Psoas muscle (tissue), 8 donors: ENCODE measurements at regions of chr3 and their contacts with region 1.

Region 1: DNA sequence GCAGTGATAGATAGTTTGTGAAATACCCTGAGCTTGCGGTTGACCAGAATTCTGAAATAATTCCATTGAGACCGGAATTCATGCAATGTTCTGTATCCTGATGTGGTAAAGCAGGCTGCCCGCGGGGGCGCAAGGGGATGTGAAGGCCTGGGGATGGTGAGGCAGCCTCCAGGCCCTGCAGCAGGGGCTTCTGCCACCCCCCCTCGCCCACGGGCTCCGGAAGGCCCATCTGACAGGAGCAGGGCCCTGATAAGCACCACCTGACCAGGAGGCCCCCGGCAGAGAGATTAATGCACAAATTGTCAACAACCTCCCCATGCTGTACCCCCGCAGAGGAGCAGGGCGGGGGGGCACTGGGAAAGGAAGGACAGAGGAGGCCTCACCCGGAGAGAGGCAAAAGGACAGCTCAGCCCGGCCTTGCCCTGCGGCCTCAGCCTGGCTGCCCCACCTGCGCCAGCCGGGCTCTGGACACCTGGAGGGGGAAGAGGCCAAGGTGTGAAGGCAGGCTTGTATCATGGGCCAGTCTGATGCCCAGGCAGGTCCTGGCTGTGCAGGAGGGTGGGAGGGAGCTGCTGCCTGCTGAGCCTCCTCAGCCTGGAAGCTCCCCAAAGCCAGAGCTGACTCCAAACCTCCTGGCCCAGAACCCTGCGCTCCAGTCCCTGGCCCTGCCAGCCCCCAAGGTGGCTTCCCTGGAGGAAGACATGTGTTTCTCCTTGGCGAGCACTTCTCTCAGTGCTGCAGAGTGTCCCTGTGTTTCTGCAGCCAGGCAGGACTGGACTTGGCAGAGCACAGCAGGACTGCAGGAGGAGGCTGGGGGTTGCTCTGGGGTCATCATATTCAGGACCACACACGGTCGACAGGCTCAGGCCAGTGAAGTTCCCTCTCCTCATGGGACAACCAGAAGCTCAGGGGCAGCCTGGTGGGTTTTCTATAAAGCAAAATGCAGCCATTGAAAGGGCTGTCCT is 46.5 kb downstream of the RPN1 start:
- DNase-seq: no peak
- ATAC-seq: no peak
- H3K4me3 ChIP-seq: no peak overlapping the region
- H3K27ac ChIP-seq: no peak overlapping the region
- H3K4me1 ChIP-seq: no peaks in the 10 kb centered on the region
- H3K27me3 ChIP-seq: no peaks in the 10 kb centered on the region
- CTCF ChIP-seq: no peak

Region 2: DNA sequence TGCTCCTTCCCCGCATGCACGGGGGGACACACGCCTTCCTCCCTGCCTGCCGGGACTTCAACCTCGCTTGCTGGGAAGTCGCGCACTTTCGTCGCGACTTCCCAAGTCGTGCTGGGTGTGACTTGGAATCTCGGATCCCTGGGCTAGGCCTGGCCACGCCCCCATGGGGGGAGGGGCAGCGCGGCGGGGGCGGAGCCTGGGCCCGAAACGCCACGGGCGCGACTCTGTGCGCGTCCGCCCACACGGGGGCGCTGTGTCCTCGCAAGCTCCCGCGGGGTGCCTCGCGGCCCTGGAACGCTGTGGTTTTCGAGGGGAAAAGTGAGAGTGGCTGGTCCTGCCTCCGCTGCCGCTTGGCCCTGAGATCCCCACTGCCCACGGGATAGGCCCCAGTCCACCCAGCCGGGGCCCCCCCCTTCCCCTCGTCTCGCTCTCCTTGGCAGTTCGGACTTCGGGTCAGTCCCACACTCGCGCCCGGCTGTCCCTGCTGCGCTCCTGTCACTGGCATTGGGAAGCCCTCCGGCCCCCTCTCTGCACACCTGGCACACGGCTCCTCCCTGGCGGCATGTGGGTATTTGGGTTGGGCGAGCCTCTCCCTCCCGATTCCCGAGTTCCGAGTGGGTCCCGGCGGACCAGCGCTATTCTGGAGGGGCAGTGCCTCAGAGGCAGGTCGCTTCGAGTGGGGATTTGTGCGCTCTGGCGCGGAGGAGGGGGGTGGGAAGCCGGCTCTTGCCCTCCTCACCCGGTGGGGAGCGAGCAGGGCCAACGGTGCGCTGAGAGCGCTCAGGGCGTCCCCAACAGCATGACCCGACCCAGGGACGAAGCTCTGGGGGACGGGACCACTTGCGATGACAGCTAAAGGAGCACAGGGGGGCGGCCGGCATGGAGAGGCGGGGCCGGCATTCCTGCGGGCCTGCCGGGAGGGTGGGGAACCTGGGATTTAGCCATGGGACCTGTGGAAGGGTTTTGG is 528.3 kb before region 1 on chr3:
- intact Hi-C with region 1: loop called (anchors 5 to 10 kb)
- DNase-seq: peak; percentile 89 to 94
- ATAC-seq: peak; percentile 91 to 94 (median 92)
- H3K4me3 ChIP-seq: peak overlapping the region; percentile 70
- H3K27ac ChIP-seq: peak overlapping the region; percentile 41
- H3K4me1 ChIP-seq: peaks cover 9% of the 10 kb centered on the region
- H3K27me3 ChIP-seq: no peaks in the 10 kb centered on the region
- CTCF ChIP-seq: peak; percentile 95

Region 3: GRCh38 chr3:128095222-128095703 is 508.8 kb before region 1 on chr3:
- intact Hi-C with region 1: loop called in 1 of 2 experiments (anchors 5 kb)
- DNase-seq: peak; percentile 76 to 88
- ATAC-seq: peak; percentile 96 to 100 (median 98)
- H3K4me3 ChIP-seq: no peak overlapping the region
- H3K27ac ChIP-seq: peak overlapping the region; percentile 30
- H3K4me1 ChIP-seq: peaks cover 4% of the 10 kb centered on the region
- H3K27me3 ChIP-seq: no peaks in the 10 kb centered on the region
- CTCF ChIP-seq: peak; percentile 88

Region 4: DNA sequence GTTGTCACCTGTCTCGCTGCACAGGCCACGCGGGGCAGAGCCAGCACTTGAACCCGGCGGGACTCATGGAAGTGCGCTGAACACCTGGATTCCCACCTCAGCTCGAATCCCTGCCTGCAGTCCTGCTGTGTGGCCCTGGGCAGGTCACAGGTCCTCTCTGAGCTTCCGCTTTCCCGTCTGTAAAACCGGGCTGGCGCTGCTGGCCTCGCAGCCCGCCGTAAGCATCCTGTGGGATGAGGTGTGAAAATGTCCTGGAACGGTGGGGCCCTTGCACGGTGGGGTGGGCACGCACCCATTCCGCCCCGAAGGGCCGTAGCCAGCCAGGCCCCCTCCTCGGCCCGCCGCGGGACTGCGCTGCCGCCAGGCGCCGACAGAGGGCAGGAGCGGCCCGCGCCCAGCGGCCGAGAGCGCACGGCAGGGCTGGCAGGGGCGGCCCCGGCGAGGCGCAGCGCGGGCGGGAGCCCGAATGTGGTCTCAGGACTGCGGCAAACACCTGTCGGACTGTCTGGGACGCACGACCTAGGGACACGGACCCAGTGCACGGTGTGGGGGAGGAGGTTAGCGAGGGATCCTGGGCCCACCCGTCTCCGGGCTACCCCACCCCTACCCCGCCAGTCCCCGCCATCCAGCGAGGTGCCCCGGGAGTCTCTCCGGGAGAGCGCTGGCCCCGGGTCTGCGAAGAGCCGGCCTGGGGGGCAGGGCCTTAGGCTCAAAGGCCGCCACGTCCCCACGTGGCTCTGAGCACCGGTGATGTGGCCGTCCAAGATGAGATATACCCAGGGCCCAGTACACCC is 177.8 kb before region 1 on chr3:
- intact Hi-C with region 1: loop called (anchors 2 to 5 kb)
- DNase-seq: peak in 1 of 2 donors; percentile 68
- ATAC-seq: peak; percentile 92 to 97 (median 94)
- H3K4me3 ChIP-seq: peak overlapping the region; percentile 40
- H3K27ac ChIP-seq: no peak overlapping the region
- H3K4me1 ChIP-seq: peaks cover 3% of the 10 kb centered on the region
- H3K27me3 ChIP-seq: peaks cover 0 to 6% (median 0%) of the 10 kb centered on the region in 3 donors
- CTCF ChIP-seq: peak; percentile 96